ENCODE measurements at regions of chr13 and their contacts with region 1.

Region 1: GRCh38 chr13:94710881-94711560 is 1.3 kb downstream of the SOX21 start:
- DNase-seq: peak; percentile 52
- ATAC-seq: peak; percentile 63
- H3K4me3 Mint-ChIP-seq: peak overlapping the region; percentile 19
- H3K27ac Mint-ChIP-seq: no peak overlapping the region
- H3K4me1 Mint-ChIP-seq: peaks cover 21% of the 10 kb centered on the region
- H3K27me3 Mint-ChIP-seq: peaks cover 68% of the 10 kb centered on the region

Region 2: DNA sequence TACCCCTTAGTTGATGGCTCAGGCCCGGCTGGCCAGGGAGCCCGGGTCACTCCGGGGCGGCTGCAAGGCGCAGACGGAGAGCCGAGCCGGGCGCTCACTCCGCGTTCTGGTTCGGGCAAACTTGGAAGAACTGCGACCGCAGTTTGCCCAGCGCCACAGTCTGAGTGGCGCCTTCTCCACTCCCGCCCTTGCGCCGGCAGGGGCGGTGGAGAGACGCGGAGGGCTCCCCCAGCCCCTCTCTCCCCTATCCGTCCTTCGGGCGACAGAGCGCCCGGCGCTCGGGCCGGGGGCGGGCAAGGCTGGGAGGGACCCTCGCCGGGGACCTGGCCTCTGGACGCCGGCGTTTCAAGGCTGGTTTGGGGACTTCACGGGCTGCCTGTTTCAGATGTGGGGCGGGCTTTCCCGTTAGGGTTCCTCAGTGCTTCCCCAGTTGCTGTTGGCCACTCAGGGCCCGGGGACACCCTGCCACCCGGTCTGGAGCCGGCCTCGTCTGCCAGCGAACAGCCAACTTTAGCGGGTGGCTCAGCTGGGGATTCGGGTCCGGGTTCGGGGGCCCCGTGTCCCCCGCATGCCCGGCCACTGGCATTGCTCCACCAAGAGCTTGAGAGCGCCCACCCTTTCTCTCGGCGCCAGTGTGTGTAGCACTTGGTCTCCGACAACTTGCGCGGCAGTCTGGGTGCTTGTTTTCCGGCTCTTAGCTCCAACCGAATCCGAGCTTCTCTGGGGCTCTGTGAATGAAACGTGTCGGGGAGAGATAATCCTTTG is 1483.0 kb before region 1 on chr13:
- CTCF ChIA-PET with region 1: no interaction called
- POLR2A ChIA-PET with region 1: no interaction called
- intact Hi-C with region 1: loop called in 1 of 2 experiments (anchors 5 kb)
- DNase-seq: peak; percentile 8
- ATAC-seq: no peak
- H3K4me3 Mint-ChIP-seq: no peak overlapping the region
- H3K27ac Mint-ChIP-seq: no peak overlapping the region
- H3K4me1 Mint-ChIP-seq: peaks cover 1% of the 10 kb centered on the region
- H3K27me3 Mint-ChIP-seq: peaks cover 38% of the 10 kb centered on the region

Region 3: GRCh38 chr13:94620286-94620896 is 90.6 kb before region 1 on chr13:
- CTCF ChIA-PET with region 1: interaction called, 3 read pairs
- POLR2A ChIA-PET with region 1: no interaction called
- intact Hi-C with region 1: loop called in 1 of 2 experiments (anchors 5 kb)
- DNase-seq: peak; percentile 51
- ATAC-seq: peak; percentile 63
- H3K4me3 Mint-ChIP-seq: no peak overlapping the region
- H3K27ac Mint-ChIP-seq: no peak overlapping the region
- H3K4me1 Mint-ChIP-seq: peaks cover 10% of the 10 kb centered on the region
- H3K27me3 Mint-ChIP-seq: no peaks in the 10 kb centered on the region

Region 4: GRCh38 chr13:94974015-94974951 is 263.3 kb after region 1 on chr13:
- CTCF ChIA-PET with region 1: interaction called, 3 read pairs
- POLR2A ChIA-PET with region 1: no interaction called
- intact Hi-C with region 1: loop called (anchors 5 to 10 kb)
- DNase-seq: no peak
- ATAC-seq: no peak
- H3K4me3 Mint-ChIP-seq: no peak overlapping the region
- H3K27ac Mint-ChIP-seq: no peak overlapping the region
- H3K4me1 Mint-ChIP-seq: no peaks in the 10 kb centered on the region
- H3K27me3 Mint-ChIP-seq: peaks cover 14% of the 10 kb centered on the region

Region 5: GRCh38 chr13:96089749-96090239 is 1378.8 kb after region 1 on chr13 and contains the start of gene HS6ST3:
- CTCF ChIA-PET with region 1: no interaction called
- POLR2A ChIA-PET with region 1: no interaction called
- intact Hi-C with region 1: loop called in 1 of 2 experiments (anchors 5 kb)
- DNase-seq: peak; percentile 13
- ATAC-seq: no peak
- H3K4me3 Mint-ChIP-seq: peak within 1 kb of the TSS; percentile 18
- H3K27ac Mint-ChIP-seq: no peak within 1 kb of the TSS
- H3K4me1 Mint-ChIP-seq: peaks cover 3% of the 10 kb centered on the region
- H3K27me3 Mint-ChIP-seq: peaks cover 51% of the 10 kb centered on the region
- total RNA-seq, gene HS6ST3: not detected

Measured in activated CD4-positive, alpha-beta T cell treated with anti-CD3 and anti-CD28 coated beads for 36 hours (primary cell).